ENCODE measurements at regions of chr5 and their contacts with region 1.

Region 1: GRCh38 chr5:98773464-98774191 is at the start of gene RGMB:
- DNase-seq: peak; percentile 99
- H3K4me3 ChIP-seq: peak within 1 kb of the TSS; percentile 82
- H3K27ac ChIP-seq: peak within 1 kb of the TSS; percentile 85
- H3K27me3 ChIP-seq: no peaks in the 10 kb centered on the region
- CTCF ChIP-seq: no peak

Region 2: DNA sequence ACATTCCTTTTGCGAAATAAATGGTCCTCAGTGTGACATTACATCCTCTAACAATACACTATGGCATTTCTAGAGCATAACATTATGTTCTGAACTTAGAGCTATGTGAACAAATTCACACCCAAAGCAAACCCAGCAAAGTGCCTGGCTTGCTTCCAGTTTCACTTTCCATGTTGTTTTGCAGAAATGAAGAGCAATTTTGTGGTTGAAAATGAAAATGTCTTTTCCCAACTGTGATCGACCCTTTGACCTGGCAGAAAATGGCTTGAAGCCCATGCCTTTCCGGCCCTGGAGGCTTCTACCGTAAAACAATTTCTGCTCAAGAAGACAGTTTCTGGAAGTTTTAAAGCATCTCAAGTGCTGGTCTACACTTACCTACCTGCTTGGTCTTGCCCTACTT is 344.8 kb before region 1 on chr5:
- in situ Hi-C with region 1: loop called (anchors 25 kb)
- DNase-seq: peak; percentile 91
- H3K4me3 ChIP-seq: no peak overlapping the region
- H3K27ac ChIP-seq: no peak overlapping the region
- H3K27me3 ChIP-seq: no peaks in the 10 kb centered on the region
- CTCF ChIP-seq: no peak

Region 3: DNA sequence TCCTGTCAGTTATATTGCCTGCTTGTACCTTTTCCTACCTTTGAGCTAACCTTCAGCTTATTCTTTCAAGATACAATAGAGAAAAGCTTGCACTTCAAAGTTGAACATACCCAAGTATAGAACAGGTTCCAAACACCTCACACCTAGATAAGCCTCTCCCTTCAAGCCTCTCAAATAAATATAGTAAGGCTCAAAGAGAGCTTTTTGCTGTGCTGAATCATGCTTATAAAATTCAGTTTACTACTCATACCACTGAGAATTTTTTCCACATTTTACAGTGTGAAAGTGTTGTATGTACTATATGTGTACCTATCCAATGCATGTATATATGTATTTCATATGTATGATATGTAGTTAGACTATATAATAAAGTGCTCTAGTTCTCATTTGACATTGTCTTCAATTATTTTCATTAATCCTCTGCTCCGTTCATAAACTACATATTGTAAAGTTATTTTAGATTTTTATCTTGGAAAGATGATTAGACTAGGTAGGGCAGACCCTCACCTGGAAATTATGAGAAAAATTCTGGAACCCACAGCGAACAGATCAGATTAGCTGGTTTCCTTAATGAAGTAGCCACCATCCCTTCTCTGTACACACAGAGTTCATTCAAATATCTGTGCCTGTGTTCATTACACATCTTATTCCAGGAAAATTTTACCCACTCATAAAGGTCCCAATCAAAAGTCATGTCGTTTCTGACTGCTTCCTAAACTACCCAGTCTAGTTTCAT is 149.3 kb before region 1 on chr5:
- in situ Hi-C with region 1: no loop called
- DNase-seq: no peak
- H3K4me3 ChIP-seq: no peak overlapping the region
- H3K27ac ChIP-seq: no peak overlapping the region
- H3K27me3 ChIP-seq: no peaks in the 10 kb centered on the region
- CTCF ChIP-seq: no peak